Activated CD4-positive, alpha-beta memory T cell treated with anti-CD3 and anti-CD28 coated beads for 36 hours (primary cell): ENCODE measurements at regions of chr14 and their contacts with region 1.

Region 1: GRCh38 chr14:76910371-76910890 is 84.2 kb downstream of the LRRC74A start:
- DNase-seq: no peak
- H3K4me3 Mint-ChIP-seq: no peak overlapping the region
- H3K27ac Mint-ChIP-seq: no peak overlapping the region
- H3K4me1 Mint-ChIP-seq: peaks cover 19% of the 10 kb centered on the region
- H3K27me3 Mint-ChIP-seq: no peaks in the 10 kb centered on the region

Region 2: GRCh38 chr14:76793956-76794355 is 116.5 kb before region 1 on chr14:
- CTCF ChIA-PET with region 1: no interaction called
- POLR2A ChIA-PET with region 1: no interaction called
- intact Hi-C with region 1: no loop called
- DNase-seq: no peak
- H3K4me3 Mint-ChIP-seq: no peak overlapping the region
- H3K27ac Mint-ChIP-seq: no peak overlapping the region
- H3K4me1 Mint-ChIP-seq: no peaks in the 10 kb centered on the region
- H3K27me3 Mint-ChIP-seq: no peaks in the 10 kb centered on the region

Region 3: DNA sequence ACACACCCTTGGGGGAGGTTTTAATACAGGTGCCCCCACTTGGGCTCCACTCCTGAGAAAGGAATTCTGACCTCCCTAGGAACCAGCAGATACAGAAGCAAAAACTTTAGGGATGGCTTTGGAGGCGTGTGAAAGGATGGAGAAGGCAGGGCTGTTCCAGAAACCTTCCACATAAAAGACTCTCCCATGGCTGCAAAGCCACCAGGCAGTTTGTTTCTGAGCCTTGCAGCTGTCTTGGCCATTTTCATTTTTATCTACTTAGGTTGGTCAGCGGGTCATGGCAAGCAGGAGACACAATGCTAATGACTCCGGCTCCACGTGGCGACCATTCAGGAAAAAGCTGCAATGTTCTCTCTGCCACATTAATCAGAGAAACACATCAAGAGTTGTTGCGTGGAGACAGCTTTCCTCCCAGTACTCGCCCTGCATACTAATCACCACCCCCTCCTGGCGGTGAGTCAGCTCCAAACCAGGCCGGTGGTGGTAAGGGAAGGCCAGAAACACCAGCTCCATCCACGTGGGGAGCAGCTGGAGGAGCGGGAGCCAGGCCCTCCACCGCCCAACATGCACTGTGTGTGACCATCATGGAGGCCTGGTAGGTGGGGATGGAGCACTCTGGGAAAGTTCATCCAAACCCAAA is 149.0 kb after region 1 on chr14:
- CTCF ChIA-PET with region 1: interaction called, 130 read pairs
- POLR2A ChIA-PET with region 1: interaction called, 3 read pairs
- intact Hi-C with region 1: no loop called
- DNase-seq: peak; percentile 69
- H3K4me3 Mint-ChIP-seq: no peak overlapping the region
- H3K27ac Mint-ChIP-seq: no peak overlapping the region
- H3K4me1 Mint-ChIP-seq: peaks cover 15% of the 10 kb centered on the region
- H3K27me3 Mint-ChIP-seq: no peaks in the 10 kb centered on the region

Region 4: DNA sequence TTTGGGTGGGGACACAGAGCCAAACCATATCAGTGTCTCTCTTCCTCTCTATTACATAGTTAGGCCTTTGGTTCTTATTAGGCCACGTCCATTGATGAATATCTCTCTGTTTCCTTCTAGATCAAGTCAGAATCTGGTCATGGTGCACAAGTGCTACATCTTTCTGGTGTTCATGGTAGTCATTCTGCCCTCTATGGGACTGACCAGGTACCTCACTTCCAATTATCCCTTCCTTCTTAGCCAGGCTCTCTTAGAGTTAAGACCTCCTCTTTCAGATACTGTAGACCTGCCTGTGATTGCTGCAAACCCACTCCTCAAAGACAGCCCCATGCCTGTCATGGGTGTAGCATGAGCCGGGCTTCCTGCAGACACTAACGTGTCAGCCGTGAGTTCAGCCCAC is 335.4 kb after region 1 on chr14:
- CTCF ChIA-PET with region 1: no interaction called
- POLR2A ChIA-PET with region 1: no interaction called
- intact Hi-C with region 1: no loop called
- DNase-seq: no peak
- H3K4me3 Mint-ChIP-seq: no peak overlapping the region
- H3K27ac Mint-ChIP-seq: no peak overlapping the region
- H3K4me1 Mint-ChIP-seq: no peaks in the 10 kb centered on the region
- H3K27me3 Mint-ChIP-seq: peaks cover 2% of the 10 kb centered on the region